ENCODE measurements at regions of chr15 and their contacts with region 1.

Region 1: GRCh38 chr15:91885714-91886270 is 32.3 kb downstream of the SLCO3A1 start:
- DNase-seq: no peak
- H3K4me3 ChIP-seq: no peak overlapping the region
- H3K27ac ChIP-seq: no peak overlapping the region
- H3K4me1 ChIP-seq: peaks cover 3% of the 10 kb centered on the region
- H3K27me3 ChIP-seq: no peaks in the 10 kb centered on the region
- CTCF ChIP-seq: no peak
- EP300 ChIP-seq: no peak
- POLR2A ChIP-seq: no peak

Region 2: GRCh38 chr15:91400481-91400880 is 485.3 kb before region 1 on chr15:
- intact Hi-C with region 1: no loop called
- DNase-seq: no peak
- H3K4me3 ChIP-seq: no peak overlapping the region
- H3K27ac ChIP-seq: no peak overlapping the region
- H3K4me1 ChIP-seq: no peaks in the 10 kb centered on the region
- H3K27me3 ChIP-seq: no peaks in the 10 kb centered on the region
- CTCF ChIP-seq: no peak
- EP300 ChIP-seq: no peak
- POLR2A ChIP-seq: no peak

Region 3: GRCh38 chr15:91737151-91737818 is 148.5 kb before region 1 on chr15:
- intact Hi-C with region 1: no loop called
- DNase-seq: no peak
- H3K4me3 ChIP-seq: no peak overlapping the region
- H3K27ac ChIP-seq: no peak overlapping the region
- H3K4me1 ChIP-seq: peaks cover 2% of the 10 kb centered on the region
- H3K27me3 ChIP-seq: no peaks in the 10 kb centered on the region
- CTCF ChIP-seq: no peak
- EP300 ChIP-seq: no peak
- POLR2A ChIP-seq: no peak

Region 4: DNA sequence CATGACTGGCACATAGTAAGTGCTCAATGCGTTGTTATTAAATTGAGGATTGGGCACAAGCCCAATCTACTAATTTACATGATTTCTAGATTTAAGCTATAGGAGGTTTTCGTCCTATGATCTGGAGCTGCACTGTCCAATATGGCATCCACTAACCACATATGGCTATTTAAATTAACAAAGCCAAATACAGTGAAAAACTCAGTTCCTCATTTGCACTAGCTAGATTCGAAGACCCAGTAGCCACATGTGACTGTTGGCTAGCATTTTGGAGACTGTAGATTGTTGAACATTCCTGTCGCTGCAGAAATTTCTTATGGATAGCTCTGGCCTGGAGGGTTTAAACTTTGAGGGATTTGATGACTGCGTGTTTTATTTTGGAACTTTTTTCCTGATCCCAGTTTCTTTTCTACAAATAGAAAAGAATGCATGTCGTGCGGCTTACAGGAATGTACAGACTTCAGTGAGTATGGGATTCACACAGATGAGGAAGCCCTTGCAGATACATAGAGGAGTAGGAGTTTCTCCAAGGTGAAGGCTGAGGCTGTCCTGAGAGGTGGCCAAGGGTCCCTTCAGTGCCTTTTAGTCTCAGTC is 50.5 kb after region 1 on chr15:
- intact Hi-C with region 1: loop called in 1 of 4 experiments (anchors 5 kb)
- DNase-seq: no peak
- H3K4me3 ChIP-seq: no peak overlapping the region
- H3K27ac ChIP-seq: no peak overlapping the region
- H3K4me1 ChIP-seq: peaks cover 13% of the 10 kb centered on the region
- H3K27me3 ChIP-seq: no peaks in the 10 kb centered on the region
- CTCF ChIP-seq: no peak
- EP300 ChIP-seq: no peak
- POLR2A ChIP-seq: no peak

Measured in ovary (tissue), 10 donors.